A673 (cell line): ENCODE measurements at regions of chr2 and their contacts with region 1.

Region 1: DNA sequence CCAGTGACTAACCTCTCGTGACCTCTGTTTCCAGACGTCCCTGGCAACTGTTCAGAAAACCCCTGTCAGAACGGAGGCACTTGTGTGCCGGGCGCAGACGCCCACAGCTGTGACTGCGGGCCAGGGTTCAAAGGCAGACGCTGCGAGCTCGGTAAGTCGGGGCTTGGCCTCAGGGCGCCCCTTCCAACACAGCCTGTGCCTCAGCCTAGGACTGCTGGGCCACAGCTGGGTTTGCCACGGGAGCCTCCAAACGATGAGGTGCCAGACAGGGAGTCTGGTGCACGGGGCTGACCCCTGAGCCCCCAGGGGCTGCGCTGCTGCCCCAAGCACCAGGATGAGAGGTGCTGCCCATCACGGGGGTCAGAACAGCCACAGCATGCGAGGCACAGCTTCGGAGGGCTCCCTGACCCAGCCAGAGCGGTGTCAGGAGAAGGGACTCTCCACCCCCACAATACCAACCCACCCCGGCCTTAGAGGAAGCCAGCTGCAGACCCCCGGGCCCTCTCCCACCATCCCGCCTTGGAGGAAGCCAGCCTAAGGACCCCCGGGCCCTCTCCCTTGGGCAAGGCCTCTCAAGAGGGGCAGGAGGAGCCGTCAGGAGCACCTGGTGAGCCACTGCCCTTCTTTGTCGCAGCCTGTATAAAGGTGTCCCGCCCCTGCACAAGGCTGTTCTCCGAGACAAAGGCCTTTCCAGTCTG is 20.3 kb downstream of the MTERF4 start:
- DNase-seq: no peak
- H3K4me3 ChIP-seq: no peak overlapping the region
- H3K27ac ChIP-seq: no peak overlapping the region
- H3K4me1 ChIP-seq: no peaks in the 10 kb centered on the region
- H3K27me3 ChIP-seq: no peaks in the 10 kb centered on the region
- CTCF ChIP-seq: no peak

Region 2: GRCh38 chr2:240780023-240780700 is 301.6 kb before region 1 on chr2:
- CTCF ChIA-PET with region 1: no interaction called
- POLR2A ChIA-PET with region 1: no interaction called
- intact Hi-C with region 1: no loop called
- DNase-seq: peak; percentile 15
- H3K4me3 ChIP-seq: no peak overlapping the region
- H3K27ac ChIP-seq: no peak overlapping the region
- H3K4me1 ChIP-seq: no peaks in the 10 kb centered on the region
- H3K27me3 ChIP-seq: no peaks in the 10 kb centered on the region
- CTCF ChIP-seq: no peak

Region 3: DNA sequence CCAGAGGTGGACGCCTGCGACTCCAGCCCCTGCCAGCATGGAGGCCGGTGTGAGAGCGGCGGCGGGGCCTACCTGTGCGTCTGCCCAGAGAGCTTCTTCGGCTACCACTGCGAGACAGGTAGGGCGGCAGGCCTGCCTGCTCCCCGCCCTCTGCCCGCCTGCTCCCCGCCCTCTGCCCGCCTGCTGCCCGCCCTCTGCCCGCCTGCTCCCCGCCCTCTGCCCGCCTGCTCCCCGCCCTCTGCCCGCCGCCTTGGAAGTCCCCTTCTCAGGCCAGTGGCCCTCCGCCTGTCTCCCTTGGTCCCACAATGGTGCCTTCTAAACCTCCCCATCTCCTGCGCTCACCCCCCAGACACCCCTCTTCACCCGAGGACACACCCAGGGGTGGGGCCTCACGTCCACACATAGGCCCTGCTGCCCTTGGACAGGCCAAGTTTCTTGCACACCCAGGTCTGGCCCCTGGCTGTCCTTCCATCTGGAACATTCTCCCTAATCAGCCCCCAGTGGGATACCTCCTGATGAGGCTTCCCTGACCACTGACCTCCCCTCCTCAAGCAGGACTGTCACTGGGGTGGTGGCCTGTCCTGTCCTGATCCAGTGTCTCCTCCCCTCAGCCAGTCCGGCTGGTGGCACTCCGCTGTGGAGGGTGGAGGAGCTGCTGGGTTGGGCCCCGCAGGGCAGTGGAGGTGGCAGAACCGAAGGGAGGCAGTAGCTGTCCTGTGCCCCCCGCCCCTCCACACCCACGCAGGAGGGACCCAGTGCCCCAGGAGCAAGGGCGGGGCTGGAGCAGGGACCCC is 17.6 kb before region 1 on chr2:
- CTCF ChIA-PET with region 1: no interaction called
- POLR2A ChIA-PET with region 1: no interaction called
- intact Hi-C with region 1: loop called (anchors 1 kb)
- DNase-seq: no peak
- H3K4me3 ChIP-seq: no peak overlapping the region
- H3K27ac ChIP-seq: no peak overlapping the region
- H3K4me1 ChIP-seq: no peaks in the 10 kb centered on the region
- H3K27me3 ChIP-seq: no peaks in the 10 kb centered on the region
- CTCF ChIP-seq: no peak

Region 4: GRCh38 chr2:241094924-241095420 is 13.2 kb after region 1 on chr2:
- CTCF ChIA-PET with region 1: no interaction called
- POLR2A ChIA-PET with region 1: interaction called, 16 read pairs
- intact Hi-C with region 1: no loop called
- DNase-seq: no peak
- H3K4me3 ChIP-seq: no peak overlapping the region
- H3K27ac ChIP-seq: no peak overlapping the region
- H3K4me1 ChIP-seq: no peaks in the 10 kb centered on the region
- H3K27me3 ChIP-seq: no peaks in the 10 kb centered on the region
- CTCF ChIP-seq: no peak